ENCODE measurements at regions of chr14 and their contacts with region 1.

Region 1: DNA sequence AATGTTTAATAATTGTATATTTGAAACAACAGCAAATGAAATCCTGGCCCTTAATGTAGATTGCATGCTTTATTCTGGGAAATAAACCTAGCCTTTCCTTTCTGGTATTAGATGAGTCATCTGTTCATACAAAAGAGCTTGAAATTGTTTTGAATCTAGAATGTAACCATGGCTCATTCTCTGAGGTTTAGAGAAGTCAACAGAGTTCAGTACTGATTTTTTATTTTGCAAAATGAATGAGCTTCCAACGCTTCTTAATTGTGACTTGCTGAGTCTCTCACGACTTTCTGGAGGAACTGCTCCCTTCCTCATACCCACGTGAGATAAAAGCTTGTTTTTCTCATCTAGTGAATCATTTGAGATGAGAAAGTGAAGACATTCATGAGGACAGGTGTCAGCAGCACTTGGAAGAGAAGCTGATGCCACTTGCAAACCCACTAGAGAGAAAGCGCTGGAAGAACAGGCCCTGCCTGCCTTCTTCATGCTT is 509.6 kb downstream of the VRK1 start:
- DNase-seq: peak; percentile 43
- H3K4me3 Mint-ChIP-seq: no peak overlapping the region
- H3K27ac Mint-ChIP-seq: peak overlapping the region; percentile 90
- H3K4me1 Mint-ChIP-seq: peaks cover 28% of the 10 kb centered on the region
- H3K27me3 Mint-ChIP-seq: no peaks in the 10 kb centered on the region

Region 2: DNA sequence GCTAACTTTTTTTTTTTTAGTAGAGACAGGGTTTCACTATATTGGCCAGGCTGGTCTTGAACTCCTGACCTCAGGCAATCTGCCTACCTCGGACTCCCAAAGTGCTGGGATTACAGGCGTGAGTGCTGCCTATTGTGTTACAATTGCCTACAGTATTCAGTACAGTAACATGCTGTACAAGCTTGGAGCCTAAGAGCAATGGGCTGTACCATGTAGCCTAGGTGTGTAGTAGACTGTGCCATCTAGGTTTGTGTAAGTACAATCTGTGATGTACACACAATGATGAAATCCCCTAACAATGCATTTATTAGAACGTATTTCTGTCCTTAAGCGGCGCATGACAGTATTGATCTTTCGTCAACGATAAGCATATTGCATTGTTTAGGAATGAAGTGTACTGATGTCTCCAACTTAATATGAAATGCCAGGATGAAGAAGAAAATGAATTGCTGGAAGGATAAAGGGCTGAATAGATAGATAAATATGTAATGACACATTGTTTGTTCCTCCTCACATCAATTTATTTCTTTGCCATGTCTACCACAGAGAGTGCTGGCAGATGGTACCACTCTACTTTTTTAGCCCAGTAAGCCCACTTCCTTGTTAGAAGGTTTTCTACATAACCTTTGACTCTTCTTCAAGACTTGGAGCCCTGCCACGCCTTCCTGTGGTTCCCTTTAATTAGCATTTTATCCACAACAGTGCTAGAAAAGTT is 42.1 kb before region 1 on chr14:
- CTCF ChIA-PET with region 1: no interaction called
- intact Hi-C with region 1: no loop called
- DNase-seq: no peak
- H3K4me3 Mint-ChIP-seq: no peak overlapping the region
- H3K27ac Mint-ChIP-seq: no peak overlapping the region
- H3K4me1 Mint-ChIP-seq: peaks cover 2% of the 10 kb centered on the region
- H3K27me3 Mint-ChIP-seq: no peaks in the 10 kb centered on the region

Region 3: GRCh38 chr14:97380539-97380941 is 73.7 kb after region 1 on chr14:
- CTCF ChIA-PET with region 1: no interaction called
- intact Hi-C with region 1: loop called (anchors 1 kb)
- DNase-seq: peak; percentile 86
- H3K4me3 Mint-ChIP-seq: no peak overlapping the region
- H3K27ac Mint-ChIP-seq: peak overlapping the region; percentile 16
- H3K4me1 Mint-ChIP-seq: peaks cover 39% of the 10 kb centered on the region
- H3K27me3 Mint-ChIP-seq: no peaks in the 10 kb centered on the region

Region 4: DNA sequence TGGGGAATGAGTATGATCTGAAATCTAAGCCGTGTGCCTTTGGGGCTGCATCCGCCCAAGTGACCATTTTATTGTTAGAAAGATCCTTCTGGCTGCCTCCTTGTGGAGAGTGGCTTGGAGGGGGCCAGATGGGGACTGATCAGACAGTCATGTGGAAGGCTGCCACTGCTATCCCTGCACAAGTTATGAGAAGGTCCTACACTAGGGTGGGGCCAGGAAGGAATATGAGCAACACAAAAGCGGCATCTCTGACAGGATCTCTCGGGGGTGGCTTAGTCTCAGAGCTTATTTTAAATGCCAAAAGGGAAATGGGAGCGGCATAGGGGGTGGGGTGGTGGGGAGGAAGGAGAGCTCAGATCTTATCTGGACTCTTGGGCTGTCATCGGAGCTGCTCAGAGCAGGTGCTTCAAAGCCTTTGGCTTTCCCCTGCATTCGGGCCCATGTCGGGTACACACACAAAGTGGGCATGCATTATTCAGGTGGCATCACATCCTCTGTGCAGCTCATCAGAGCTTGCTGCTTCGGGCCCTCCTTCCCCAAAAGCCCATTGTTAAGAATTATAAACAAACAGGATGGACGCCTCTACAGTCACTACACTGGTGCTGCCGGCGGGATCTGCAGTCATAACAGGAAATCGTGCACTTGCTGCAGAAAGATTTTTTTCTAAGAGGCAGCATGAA is 295.8 kb after region 1 on chr14:
- CTCF ChIA-PET with region 1: no interaction called
- intact Hi-C with region 1: loop called (anchors 1 kb)
- DNase-seq: peak; percentile 80
- H3K4me3 Mint-ChIP-seq: no peak overlapping the region
- H3K27ac Mint-ChIP-seq: no peak overlapping the region
- H3K4me1 Mint-ChIP-seq: peaks cover 30% of the 10 kb centered on the region
- H3K27me3 Mint-ChIP-seq: no peaks in the 10 kb centered on the region

Region 5: GRCh38 chr14:97641827-97642226 is 335.0 kb after region 1 on chr14:
- CTCF ChIA-PET with region 1: no interaction called
- intact Hi-C with region 1: no loop called
- DNase-seq: peak; percentile 55
- H3K4me3 Mint-ChIP-seq: no peak overlapping the region
- H3K27ac Mint-ChIP-seq: peak overlapping the region; percentile 42
- H3K4me1 Mint-ChIP-seq: peaks cover 50% of the 10 kb centered on the region
- H3K27me3 Mint-ChIP-seq: no peaks in the 10 kb centered on the region

Region 6: GRCh38 chr14:97788364-97788763 is 481.6 kb after region 1 on chr14:
- CTCF ChIA-PET with region 1: no interaction called
- intact Hi-C with region 1: loop called (anchors 5 kb)
- DNase-seq: no peak
- H3K4me3 Mint-ChIP-seq: no peak overlapping the region
- H3K27ac Mint-ChIP-seq: no peak overlapping the region
- H3K4me1 Mint-ChIP-seq: peaks cover 17% of the 10 kb centered on the region
- H3K27me3 Mint-ChIP-seq: no peaks in the 10 kb centered on the region

Region 7: GRCh38 chr14:99271951-99272631 is 1965.3 kb after region 1 on chr14 and contains the start of gene BCL11B:
- CTCF ChIA-PET with region 1: no interaction called
- intact Hi-C with region 1: loop called (anchors 5 kb)
- DNase-seq: peak; percentile 95
- H3K4me3 Mint-ChIP-seq: peak within 1 kb of the TSS; percentile 96
- H3K27ac Mint-ChIP-seq: peak within 1 kb of the TSS; percentile 97
- H3K4me1 Mint-ChIP-seq: peaks cover 23% of the 10 kb centered on the region
- H3K27me3 Mint-ChIP-seq: no peaks in the 10 kb centered on the region
- total RNA-seq, gene BCL11B: 71.7 to 71.9 TPM